GM10248 (cell line): ENCODE measurements at regions of chr15 and their contacts with region 1.

Region 1: GRCh38 chr15:73601451-73602445 is 31.4 kb downstream of the NPTN start:
- DNase-seq: no peak
- CTCF ChIP-seq: no peak

Region 2: GRCh38 chr15:73530649-73531048 is 71.1 kb before region 1 on chr15:
- CTCF ChIA-PET with region 1: no interaction called
- POLR2A ChIA-PET with region 1: no interaction called
- DNase-seq: no peak
- CTCF ChIP-seq: no peak

Region 3: GRCh38 chr15:73617301-73617831 is 15.6 kb after region 1 on chr15:
- CTCF ChIA-PET with region 1: interaction called, 92 read pairs
- POLR2A ChIA-PET with region 1: no interaction called
- DNase-seq: no peak
- CTCF ChIP-seq: no peak